CD8-positive, alpha-beta T cell (primary cell): ENCODE measurements at regions of chr11 and their contacts with region 1.

Region 1: GRCh38 chr11:87059596-87060390 is 22.1 kb downstream of the TMEM135 start:
- DNase-seq: no peak
- ATAC-seq: no peak
- H3K4me3 ChIP-seq: no peak overlapping the region
- H3K4me3 Mint-ChIP-seq: no peak overlapping the region
- H3K27ac ChIP-seq: no peak overlapping the region
- H3K27ac Mint-ChIP-seq: no peak overlapping the region
- H3K4me1 ChIP-seq: no peaks in the 10 kb centered on the region
- H3K4me1 Mint-ChIP-seq: peaks cover 24% of the 10 kb centered on the region
- H3K27me3 ChIP-seq: no peaks in the 10 kb centered on the region
- H3K27me3 Mint-ChIP-seq: no peaks in the 10 kb centered on the region
- CTCF ChIP-seq: no peak

Region 2: GRCh38 chr11:87007963-87008362 is 51.8 kb before region 1 on chr11:
- CTCF ChIA-PET with region 1: interaction called, 3 read pairs
- POLR2A ChIA-PET with region 1: no interaction called
- intact Hi-C with region 1: loop called in 1 of 2 experiments (anchors 2 kb)
- DNase-seq: no peak
- ATAC-seq: no peak
- H3K4me3 ChIP-seq: no peak overlapping the region
- H3K4me3 Mint-ChIP-seq: no peak overlapping the region
- H3K27ac ChIP-seq: no peak overlapping the region
- H3K27ac Mint-ChIP-seq: no peak overlapping the region
- H3K4me1 ChIP-seq: no peaks in the 10 kb centered on the region
- H3K4me1 Mint-ChIP-seq: no peaks in the 10 kb centered on the region
- H3K27me3 ChIP-seq: no peaks in the 10 kb centered on the region
- H3K27me3 Mint-ChIP-seq: peaks cover 4% of the 10 kb centered on the region
- CTCF ChIP-seq: no peak